ENCODE measurements at regions of chr1 and their contacts with region 1.

Region 1: DNA sequence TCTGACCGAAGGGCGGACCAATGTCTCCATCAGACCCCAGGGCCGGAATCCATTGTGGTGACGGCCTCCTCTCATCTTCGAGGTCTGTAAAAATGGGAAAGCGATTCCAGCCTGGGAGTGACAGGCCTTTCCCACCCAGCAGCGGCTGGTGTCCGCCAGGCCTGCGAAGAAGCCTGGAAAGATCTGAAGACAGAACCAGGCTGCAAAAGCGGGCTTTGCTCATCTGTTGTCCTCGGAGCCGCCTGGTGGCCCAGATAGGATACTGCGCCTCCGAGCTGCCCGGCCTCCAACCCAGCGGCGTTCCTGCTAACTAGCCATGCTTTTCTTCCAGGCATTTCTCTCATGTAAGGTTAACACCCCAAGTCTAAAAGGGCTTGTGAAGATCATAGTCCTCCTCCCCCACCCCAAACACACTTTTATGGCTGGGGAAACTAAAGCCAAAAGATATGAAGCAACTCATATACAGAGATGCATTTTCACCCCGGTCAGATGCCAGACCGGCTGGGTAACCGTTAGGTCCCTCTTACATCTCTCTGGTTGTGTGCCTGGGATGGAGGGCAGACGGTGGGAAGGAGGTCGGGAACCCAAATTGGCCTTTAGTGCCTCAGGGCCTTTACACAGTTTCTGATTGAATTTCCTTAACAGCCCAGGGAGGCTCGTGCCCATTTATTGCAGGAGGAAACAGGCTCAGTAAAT is 1.9 kb upstream of the DHRS3 start:
- DNase-seq: peak; percentile 86
- ATAC-seq: peak; percentile 46
- H3K4me3 Mint-ChIP-seq: peak overlapping the region; percentile 96
- H3K27ac Mint-ChIP-seq: peak overlapping the region; percentile 99
- H3K4me1 Mint-ChIP-seq: peaks cover 32% of the 10 kb centered on the region
- H3K27me3 Mint-ChIP-seq: no peaks in the 10 kb centered on the region
- CTCF ChIP-seq: peak; percentile 98

Region 2: GRCh38 chr1:12275369-12275768 is 344.6 kb before region 1 on chr1:
- CTCF ChIA-PET with region 1: interaction called, 16 read pairs
- POLR2A ChIA-PET with region 1: no interaction called
- intact Hi-C with region 1: no loop called
- DNase-seq: peak; percentile 63
- ATAC-seq: no peak
- H3K4me3 Mint-ChIP-seq: no peak overlapping the region
- H3K27ac Mint-ChIP-seq: no peak overlapping the region
- H3K4me1 Mint-ChIP-seq: no peaks in the 10 kb centered on the region
- H3K27me3 Mint-ChIP-seq: no peaks in the 10 kb centered on the region
- CTCF ChIP-seq: peak; percentile 74

Region 3: GRCh38 chr1:12407050-12407961 is 212.6 kb before region 1 on chr1:
- CTCF ChIA-PET with region 1: interaction called, 20 read pairs
- POLR2A ChIA-PET with region 1: interaction called, 5 read pairs
- intact Hi-C with region 1: no loop called
- DNase-seq: peak; percentile 44
- ATAC-seq: peak; percentile 93
- H3K4me3 Mint-ChIP-seq: no peak overlapping the region
- H3K27ac Mint-ChIP-seq: peak overlapping the region; percentile 57
- H3K4me1 Mint-ChIP-seq: peaks cover 36% of the 10 kb centered on the region
- H3K27me3 Mint-ChIP-seq: no peaks in the 10 kb centered on the region
- CTCF ChIP-seq: peak; percentile 48

Region 4: DNA sequence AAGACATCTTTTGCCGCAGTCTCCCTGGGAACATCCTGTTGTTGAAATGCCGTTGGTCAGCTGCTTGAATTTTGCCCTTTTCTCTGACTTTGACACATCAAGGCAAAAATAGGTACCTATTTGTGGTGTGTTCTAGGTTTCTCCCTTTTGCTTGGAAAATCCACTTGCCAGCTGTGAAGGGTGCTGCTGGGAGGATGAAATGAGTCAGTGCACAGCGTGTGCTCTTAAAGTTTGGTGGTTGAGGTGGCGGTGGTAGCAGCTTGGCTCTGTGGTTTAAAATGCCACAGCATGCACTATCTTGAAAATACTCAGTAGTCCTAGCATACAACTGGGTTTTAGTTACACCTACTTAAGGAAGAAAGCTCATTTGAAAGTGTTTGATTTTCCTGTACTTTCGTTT is 185.8 kb before region 1 on chr1:
- CTCF ChIA-PET with region 1: interaction called, 8 read pairs
- POLR2A ChIA-PET with region 1: interaction called, 16 read pairs
- intact Hi-C with region 1: loop called (anchors 1 kb)
- DNase-seq: peak; percentile 93
- ATAC-seq: peak; percentile 21
- H3K4me3 Mint-ChIP-seq: peak overlapping the region; percentile 65
- H3K27ac Mint-ChIP-seq: peak overlapping the region; percentile 96
- H3K4me1 Mint-ChIP-seq: peaks cover 87% of the 10 kb centered on the region
- H3K27me3 Mint-ChIP-seq: peaks cover 2% of the 10 kb centered on the region
- CTCF ChIP-seq: no peak

Region 5: GRCh38 chr1:12472798-12473551 is 147.0 kb before region 1 on chr1:
- CTCF ChIA-PET with region 1: interaction called, 6 read pairs
- POLR2A ChIA-PET with region 1: interaction called, 10 read pairs
- intact Hi-C with region 1: loop called (anchors 2 kb)
- DNase-seq: peak; percentile 92
- ATAC-seq: peak; percentile 87
- H3K4me3 Mint-ChIP-seq: peak overlapping the region; percentile 67
- H3K27ac Mint-ChIP-seq: peak overlapping the region; percentile 95
- H3K4me1 Mint-ChIP-seq: peaks cover 90% of the 10 kb centered on the region
- H3K27me3 Mint-ChIP-seq: no peaks in the 10 kb centered on the region
- CTCF ChIP-seq: no peak

Region 6: DNA sequence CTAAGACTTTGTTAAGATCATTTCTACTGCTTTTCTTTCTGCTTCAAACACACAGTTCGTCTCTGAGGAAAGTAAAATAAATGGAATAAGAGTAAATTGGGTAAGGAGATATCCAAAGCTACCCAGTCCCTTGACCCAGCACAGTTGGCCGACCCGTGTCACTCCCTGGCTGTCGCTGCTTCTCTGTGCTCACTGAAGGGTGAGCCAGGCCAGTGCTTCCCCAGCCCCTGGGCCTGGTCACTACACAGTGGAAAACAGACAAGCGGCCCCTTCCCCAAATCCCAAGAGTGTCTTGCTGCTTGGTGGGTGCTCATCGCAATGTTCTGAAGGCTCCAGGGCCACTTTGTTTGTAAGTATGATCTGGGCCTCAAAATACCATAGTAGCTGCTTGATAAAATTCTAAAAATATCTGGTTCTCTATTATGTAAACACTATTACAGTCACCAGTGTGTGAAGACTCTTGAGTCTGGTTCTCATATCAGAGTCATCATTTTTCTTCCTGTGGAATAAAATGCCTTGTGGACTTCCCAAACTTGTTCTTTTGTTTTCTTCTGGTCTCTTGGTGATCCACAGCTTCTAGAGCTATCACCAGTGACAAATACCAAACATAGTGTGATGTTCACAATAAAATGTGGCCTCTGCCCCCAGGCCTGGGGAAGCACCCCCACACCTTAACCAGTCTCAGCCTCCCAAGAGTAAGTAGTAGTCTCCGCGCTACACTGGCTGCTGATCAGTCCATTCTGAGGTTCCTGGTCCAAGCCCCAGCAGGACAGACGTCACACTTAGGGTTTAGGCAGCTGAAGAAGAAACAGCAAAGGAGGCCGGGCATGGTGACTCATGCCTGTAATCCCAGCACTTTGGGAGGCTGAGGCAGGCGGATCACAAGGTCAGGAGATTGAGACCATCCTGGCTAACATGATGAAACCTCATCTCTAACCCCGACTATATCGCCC is 108.1 kb before region 1 on chr1:
- CTCF ChIA-PET with region 1: interaction called, 3 read pairs
- POLR2A ChIA-PET with region 1: interaction called, 9 read pairs
- intact Hi-C with region 1: loop called (anchors 5 kb)
- DNase-seq: no peak
- ATAC-seq: no peak
- H3K4me3 Mint-ChIP-seq: peak overlapping the region; percentile 75
- H3K27ac Mint-ChIP-seq: peak overlapping the region; percentile 100
- H3K4me1 Mint-ChIP-seq: peaks cover 60% of the 10 kb centered on the region
- H3K27me3 Mint-ChIP-seq: no peaks in the 10 kb centered on the region
- CTCF ChIP-seq: no peak

Region 7: DNA sequence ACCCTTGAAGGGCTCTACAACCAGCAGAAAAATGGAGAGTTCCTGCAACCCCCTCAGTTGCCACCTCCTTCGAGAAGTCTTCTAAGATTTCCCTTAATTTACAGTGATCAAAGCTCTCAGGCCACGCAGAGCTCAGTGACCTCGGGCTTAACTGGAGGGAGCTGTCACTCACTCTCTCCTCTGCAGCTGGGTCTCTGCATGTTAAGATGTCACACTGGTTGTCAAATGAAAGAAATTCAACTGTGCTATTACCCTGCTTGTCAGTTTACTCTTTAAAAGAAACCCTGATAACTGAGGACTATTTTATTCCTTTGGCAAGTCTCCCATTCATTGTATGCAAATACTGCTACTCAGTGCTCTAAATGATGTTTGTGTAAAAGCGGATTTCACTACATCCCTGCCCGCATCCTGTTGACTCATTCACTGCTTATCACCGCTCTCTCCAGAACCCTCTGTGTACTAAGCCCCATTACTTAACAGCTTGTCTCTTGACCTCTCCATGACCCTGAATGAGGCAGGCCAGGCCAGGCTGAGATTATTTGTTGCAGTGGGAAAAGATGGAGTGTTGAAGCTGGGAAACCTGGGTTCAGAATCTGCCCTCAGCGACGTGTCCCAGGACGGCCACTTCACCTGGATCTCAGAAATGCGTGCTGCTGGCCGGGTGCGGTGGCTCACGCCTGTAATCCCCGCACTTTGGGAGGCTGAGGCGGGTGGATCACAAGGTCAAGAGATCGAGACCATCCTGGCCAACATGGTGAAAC is 15.6 kb before region 1 on chr1:
- CTCF ChIA-PET with region 1: interaction called, 34 read pairs
- POLR2A ChIA-PET with region 1: interaction called, 43 read pairs
- intact Hi-C with region 1: no loop called
- DNase-seq: peak; percentile 90
- ATAC-seq: peak; percentile 93
- H3K4me3 Mint-ChIP-seq: peak overlapping the region; percentile 40
- H3K27ac Mint-ChIP-seq: peak overlapping the region; percentile 83
- H3K4me1 Mint-ChIP-seq: peaks cover 68% of the 10 kb centered on the region
- H3K27me3 Mint-ChIP-seq: no peaks in the 10 kb centered on the region
- CTCF ChIP-seq: no peak

Measured in activated CD8-positive, alpha-beta T cell treated with anti-CD3 and anti-CD28 coated beads for 36 hours (primary cell).